ENCODE measurements at regions of chr14 and their contacts with region 1.

Region 1: DNA sequence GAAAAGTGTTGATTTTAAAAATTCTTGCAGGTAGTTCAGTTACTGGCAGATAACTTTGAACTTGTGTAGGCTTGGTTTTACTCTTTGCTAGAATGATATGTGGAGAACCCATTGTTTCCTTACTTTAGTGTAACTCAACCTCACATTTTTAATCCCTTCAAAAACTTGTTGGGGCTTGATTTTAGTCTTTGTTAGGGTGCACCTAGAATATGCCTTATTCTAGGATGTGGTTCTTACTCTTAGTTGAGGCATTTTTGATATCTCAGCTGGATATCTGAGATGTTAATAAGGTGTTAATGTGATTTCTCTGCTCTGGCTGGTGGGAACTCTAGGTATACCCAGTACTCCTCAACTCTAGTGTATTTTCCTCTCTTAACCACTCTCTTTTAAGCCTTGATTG is 10.0 kb downstream of the MNAT1 start:
- DNase-seq: no peak
- ATAC-seq: no peak
- H3K4me3 ChIP-seq: no peak overlapping the region
- H3K27ac ChIP-seq: no peak overlapping the region
- H3K4me1 ChIP-seq: peaks cover 17% of the 10 kb centered on the region
- H3K27me3 ChIP-seq: no peaks in the 10 kb centered on the region
- CTCF ChIP-seq: no peak

Region 2: GRCh38 chr14:60789656-60790055 is 45.1 kb after region 1 on chr14:
- intact Hi-C with region 1: loop called in 1 of 2 experiments (anchors 10 kb)
- DNase-seq: no peak
- ATAC-seq: no peak
- H3K4me3 ChIP-seq: no peak overlapping the region
- H3K27ac ChIP-seq: no peak overlapping the region
- H3K4me1 ChIP-seq: peaks cover 32% of the 10 kb centered on the region
- H3K27me3 ChIP-seq: no peaks in the 10 kb centered on the region
- CTCF ChIP-seq: no peak

Region 3: DNA sequence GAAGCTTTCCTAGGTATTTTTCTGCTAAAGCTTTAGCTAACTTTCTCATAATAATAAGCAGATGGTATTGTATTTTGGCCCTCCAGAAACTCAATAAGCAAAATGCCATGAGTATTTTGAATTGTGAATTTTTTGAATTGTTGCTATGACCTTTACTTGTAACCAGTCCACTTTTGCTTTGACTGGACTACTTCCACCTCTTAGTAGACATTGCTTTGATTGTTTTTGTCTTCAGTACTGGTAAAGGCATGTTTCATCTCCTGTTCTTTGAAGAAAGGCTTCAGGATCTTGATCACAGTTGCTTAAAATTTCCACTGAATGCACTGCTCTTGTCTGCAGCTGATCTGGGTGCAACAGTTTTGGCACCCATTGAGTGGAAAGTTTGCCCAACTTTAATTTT is 134.0 kb after region 1 on chr14:
- intact Hi-C with region 1: no loop called
- DNase-seq: no peak
- ATAC-seq: no peak
- H3K4me3 ChIP-seq: no peak overlapping the region
- H3K27ac ChIP-seq: no peak overlapping the region
- H3K4me1 ChIP-seq: no peaks in the 10 kb centered on the region
- H3K27me3 ChIP-seq: no peaks in the 10 kb centered on the region
- CTCF ChIP-seq: no peak

Measured in psoas muscle (tissue), 8 donors.